Activated CD8-positive, alpha-beta T cell treated with anti-CD3 and anti-CD28 coated beads for 36 hours (primary cell): ENCODE measurements at regions of chr2 and their contacts with region 1.

Region 1: DNA sequence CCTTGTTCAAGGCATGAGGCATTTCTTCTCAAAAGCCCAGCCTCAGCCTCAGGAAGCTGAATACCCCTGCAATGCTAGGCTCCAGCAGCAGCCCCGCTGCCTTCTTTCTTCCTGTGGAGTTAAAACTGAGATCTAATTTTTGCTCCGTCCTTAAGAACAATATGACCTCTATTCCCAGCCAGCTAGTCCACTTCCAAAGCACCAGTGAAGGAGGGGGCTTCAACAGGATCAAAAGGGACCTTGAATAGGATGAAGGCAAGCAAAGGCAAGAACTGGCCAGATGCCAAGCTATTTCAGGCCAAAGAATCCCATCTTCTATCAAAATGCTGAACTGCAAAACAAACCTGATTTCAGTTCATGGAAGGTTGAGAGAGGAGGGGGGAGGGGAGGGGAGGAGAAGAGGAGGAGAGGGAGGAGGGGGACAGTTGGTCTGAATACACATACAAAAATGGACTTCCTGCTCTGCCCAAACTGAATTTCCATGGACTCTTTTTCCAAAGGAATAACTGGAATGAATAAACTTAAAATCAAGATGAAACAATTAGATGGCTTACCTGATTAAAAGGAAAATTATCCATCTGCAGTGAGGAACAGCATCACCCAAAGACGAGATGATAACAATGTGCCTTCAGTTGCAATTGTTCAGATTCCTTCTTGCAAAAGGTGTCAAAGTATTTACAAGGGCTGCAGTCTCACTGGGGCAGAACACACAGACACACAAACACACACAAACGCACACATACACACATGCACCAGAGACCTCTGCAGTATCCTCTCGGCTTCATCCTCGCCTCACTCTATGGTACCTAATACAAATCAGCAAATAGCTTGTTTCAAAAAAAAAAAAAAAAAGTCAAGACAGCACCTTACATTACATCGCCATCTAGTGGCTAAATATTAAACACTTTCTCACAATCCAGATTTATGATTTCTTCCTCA is at the start of gene SCN1A:
- DNase-seq: no peak
- ATAC-seq: peak; percentile 20
- H3K4me3 Mint-ChIP-seq: no peak within 1 kb of the TSS
- H3K27ac Mint-ChIP-seq: no peak within 1 kb of the TSS
- H3K4me1 Mint-ChIP-seq: peaks cover 4% of the 10 kb centered on the region
- H3K27me3 Mint-ChIP-seq: peaks cover 17% of the 10 kb centered on the region
- CTCF ChIP-seq: peak; percentile 67
- total RNA-seq, gene SCN1A: not detected

Region 2: GRCh38 chr2:165953655-165954606 is 173.6 kb before region 1 on chr2 and contains the start of gene TTC21B:
- CTCF ChIA-PET with region 1: interaction called, 10 read pairs
- POLR2A ChIA-PET with region 1: no interaction called
- intact Hi-C with region 1: loop called (anchors 5 kb)
- DNase-seq: peak; percentile 93
- ATAC-seq: peak; percentile 97
- H3K4me3 Mint-ChIP-seq: peak within 1 kb of the TSS; percentile 55
- H3K27ac Mint-ChIP-seq: peak within 1 kb of the TSS; percentile 42
- H3K4me1 Mint-ChIP-seq: peaks cover 13% of the 10 kb centered on the region
- H3K27me3 Mint-ChIP-seq: no peaks in the 10 kb centered on the region
- CTCF ChIP-seq: peak; percentile 85
- total RNA-seq, gene TTC21B: 22.1 to 24.1 TPM

Region 3: GRCh38 chr2:166057370-166058164 is 69.9 kb before region 1 on chr2:
- CTCF ChIA-PET with region 1: interaction called, 13 read pairs
- POLR2A ChIA-PET with region 1: no interaction called
- intact Hi-C with region 1: loop called (anchors 5 kb)
- DNase-seq: no peak
- ATAC-seq: no peak
- H3K4me3 Mint-ChIP-seq: no peak overlapping the region
- H3K27ac Mint-ChIP-seq: no peak overlapping the region
- H3K4me1 Mint-ChIP-seq: no peaks in the 10 kb centered on the region
- H3K27me3 Mint-ChIP-seq: no peaks in the 10 kb centered on the region
- CTCF ChIP-seq: peak; percentile 46

Region 4: GRCh38 chr2:166158546-166158945 is 31.1 kb after region 1 on chr2:
- CTCF ChIA-PET with region 1: no interaction called
- POLR2A ChIA-PET with region 1: no interaction called
- intact Hi-C with region 1: no loop called
- DNase-seq: no peak
- ATAC-seq: no peak
- H3K4me3 Mint-ChIP-seq: no peak overlapping the region
- H3K27ac Mint-ChIP-seq: no peak overlapping the region
- H3K4me1 Mint-ChIP-seq: no peaks in the 10 kb centered on the region
- H3K27me3 Mint-ChIP-seq: peaks cover 6% of the 10 kb centered on the region
- CTCF ChIP-seq: no peak